Activated T-helper 1 cell treated with anti-CD3 and anti-CD28 coated beads, Interleukin-12 subunit alpha, Interleukin-12 subunit beta, Interleukin-2, Interleukin-4 antibody, amounts not matched to agents 30 ng/mL and 10 ng/mL and 1 ng/mL, durations not matched to agents 14 hours and 24 hours and 36 hours (primary cell): ENCODE measurements at regions of chr2 and their contacts with region 1.

Region 1: GRCh38 chr2:196171248-196171871 is at the start of gene STK17B:
- DNase-seq: peak; percentile 93
- H3K4me3 Mint-ChIP-seq: peak within 1 kb of the TSS; percentile 94
- H3K27ac Mint-ChIP-seq: peak within 1 kb of the TSS; percentile 92
- H3K4me1 Mint-ChIP-seq: peaks cover 50% of the 10 kb centered on the region
- H3K27me3 Mint-ChIP-seq: no peaks in the 10 kb centered on the region
- total RNA-seq, gene STK17B: 148 and 164 TPM in 2 replicates

Region 2: DNA sequence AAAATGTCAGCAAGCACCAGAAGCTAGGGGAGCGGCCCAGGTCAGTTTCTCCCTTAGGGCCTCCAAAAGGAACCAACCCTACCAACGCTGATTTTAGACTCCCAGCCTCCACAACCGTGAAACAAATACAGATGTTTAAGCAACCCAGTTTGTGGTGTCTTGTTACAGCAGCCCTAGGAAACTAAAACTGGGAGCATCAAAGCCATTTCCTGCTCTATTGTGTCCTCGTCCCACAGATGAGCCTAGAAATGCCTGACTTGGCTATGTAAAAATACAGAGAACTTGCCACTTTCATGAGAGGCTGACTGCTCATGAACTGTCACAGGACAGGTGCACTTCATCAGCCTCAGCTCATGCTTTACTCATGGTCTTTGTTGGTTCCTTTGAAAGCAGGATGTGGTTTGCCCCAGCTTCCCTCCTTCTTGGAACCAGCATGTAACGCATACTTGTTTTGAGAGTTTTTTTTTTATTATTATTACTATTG is 611.9 kb before region 1 on chr2:
- intact Hi-C with region 1: loop called (anchors 5 kb)
- DNase-seq: peak; percentile 81
- H3K4me3 Mint-ChIP-seq: peak overlapping the region; percentile 77
- H3K27ac Mint-ChIP-seq: peak overlapping the region; percentile 96
- H3K4me1 Mint-ChIP-seq: peaks cover 62% of the 10 kb centered on the region
- H3K27me3 Mint-ChIP-seq: no peaks in the 10 kb centered on the region

Region 3: DNA sequence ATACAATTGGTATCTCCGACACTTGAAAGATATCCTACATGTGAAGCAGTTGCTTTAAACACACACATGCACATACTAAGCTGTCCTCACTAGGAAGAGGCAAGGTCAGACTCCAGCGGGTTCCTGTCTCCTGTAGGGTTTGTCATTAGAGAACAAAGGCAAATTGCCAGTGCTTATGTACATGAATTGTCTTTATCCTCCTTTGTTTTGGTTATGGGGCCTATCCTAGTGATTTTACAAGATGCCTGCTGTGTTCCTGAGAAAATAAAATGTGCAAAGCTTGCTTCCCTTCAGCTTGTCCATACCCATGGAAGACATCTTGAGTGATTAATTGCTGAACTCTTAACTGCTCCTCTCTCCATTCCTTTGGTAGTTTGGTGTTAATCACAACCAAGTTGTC is 601.0 kb before region 1 on chr2:
- intact Hi-C with region 1: no loop called
- DNase-seq: no peak
- H3K4me3 Mint-ChIP-seq: no peak overlapping the region
- H3K27ac Mint-ChIP-seq: no peak overlapping the region
- H3K4me1 Mint-ChIP-seq: peaks cover 53% of the 10 kb centered on the region
- H3K27me3 Mint-ChIP-seq: no peaks in the 10 kb centered on the region

Region 4: DNA sequence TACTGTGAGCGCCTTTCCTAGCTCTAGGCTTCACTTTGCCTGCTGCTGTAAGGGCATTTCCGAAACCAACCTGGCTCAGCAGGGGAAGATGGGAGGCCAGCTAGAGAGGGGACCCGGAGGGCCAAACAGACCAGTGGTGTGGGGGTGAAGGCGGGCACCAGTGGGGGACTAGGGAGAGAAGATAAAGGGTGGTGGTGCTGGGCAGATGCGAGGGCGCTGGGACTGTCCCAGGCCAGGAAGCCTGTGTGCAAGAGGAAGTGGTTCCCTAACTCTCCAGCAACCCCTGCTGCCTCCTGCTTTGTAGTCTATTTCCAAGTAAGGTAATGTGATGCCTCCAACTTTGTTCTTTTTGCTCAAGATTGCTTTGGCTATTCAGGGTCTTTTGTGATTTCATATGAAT is 175.9 kb before region 1 on chr2:
- intact Hi-C with region 1: no loop called
- DNase-seq: no peak
- H3K4me3 Mint-ChIP-seq: no peak overlapping the region
- H3K27ac Mint-ChIP-seq: no peak overlapping the region
- H3K4me1 Mint-ChIP-seq: peaks cover 7% of the 10 kb centered on the region
- H3K27me3 Mint-ChIP-seq: peaks cover 4% of the 10 kb centered on the region

Region 5: DNA sequence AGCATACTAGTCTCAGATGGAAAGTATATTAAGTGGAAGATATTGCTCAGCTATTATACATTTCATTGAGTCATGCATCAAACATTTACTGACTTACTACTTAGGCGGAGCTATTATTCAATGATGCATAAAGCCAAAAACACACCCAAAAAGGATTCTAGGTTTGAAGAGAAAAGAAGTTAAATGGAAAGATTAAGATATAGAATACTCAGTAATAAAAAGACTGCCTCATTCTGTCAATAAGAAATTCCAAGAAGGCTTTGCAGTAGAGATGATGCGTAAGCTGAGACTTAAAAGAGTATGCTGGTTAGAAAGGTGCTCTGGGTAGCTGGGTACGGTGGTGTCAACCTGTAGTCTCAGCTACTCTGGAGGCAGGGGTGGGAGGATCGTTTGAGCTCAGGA is 27.6 kb before region 1 on chr2:
- intact Hi-C with region 1: loop called (anchors 1 kb)
- DNase-seq: no peak
- H3K4me3 Mint-ChIP-seq: peak overlapping the region; percentile 23
- H3K27ac Mint-ChIP-seq: peak overlapping the region; percentile 88
- H3K4me1 Mint-ChIP-seq: peaks cover 59% of the 10 kb centered on the region
- H3K27me3 Mint-ChIP-seq: no peaks in the 10 kb centered on the region

Region 6: GRCh38 chr2:196205881-196206435 is 34.6 kb after region 1 on chr2:
- intact Hi-C with region 1: loop called (anchors 1 kb)
- DNase-seq: no peak
- H3K4me3 Mint-ChIP-seq: no peak overlapping the region
- H3K27ac Mint-ChIP-seq: no peak overlapping the region
- H3K4me1 Mint-ChIP-seq: peaks cover 46% of the 10 kb centered on the region
- H3K27me3 Mint-ChIP-seq: no peaks in the 10 kb centered on the region

Region 7: GRCh38 chr2:196263181-196263747 is 91.9 kb after region 1 on chr2:
- intact Hi-C with region 1: loop called (anchors 1 kb)
- DNase-seq: peak; percentile 57
- H3K4me3 Mint-ChIP-seq: peak overlapping the region; percentile 65
- H3K27ac Mint-ChIP-seq: peak overlapping the region; percentile 88
- H3K4me1 Mint-ChIP-seq: peaks cover 79% of the 10 kb centered on the region
- H3K27me3 Mint-ChIP-seq: no peaks in the 10 kb centered on the region

Region 8: GRCh38 chr2:197499594-197500526 is 1328.5 kb after region 1 on chr2 and contains the starts of genes HSPD1 and HSPE1:
- intact Hi-C with region 1: loop called (anchors 2 kb)
- DNase-seq: peak; percentile 98
- H3K4me3 Mint-ChIP-seq: peak within 1 kb of the TSS; percentile 100
- H3K27ac Mint-ChIP-seq: peak within 1 kb of the TSS; percentile 99
- H3K4me1 Mint-ChIP-seq: peaks cover 50% of the 10 kb centered on the region
- H3K27me3 Mint-ChIP-seq: no peaks in the 10 kb centered on the region
- total RNA-seq, gene HSPD1: 811 and 821 TPM in 2 replicates
- total RNA-seq, gene HSPE1: 325 and 343 TPM in 2 replicates